Left colon (tissue), 2 donors: ENCODE measurements at regions of chr6 and their contacts with region 1.

Region 1: DNA sequence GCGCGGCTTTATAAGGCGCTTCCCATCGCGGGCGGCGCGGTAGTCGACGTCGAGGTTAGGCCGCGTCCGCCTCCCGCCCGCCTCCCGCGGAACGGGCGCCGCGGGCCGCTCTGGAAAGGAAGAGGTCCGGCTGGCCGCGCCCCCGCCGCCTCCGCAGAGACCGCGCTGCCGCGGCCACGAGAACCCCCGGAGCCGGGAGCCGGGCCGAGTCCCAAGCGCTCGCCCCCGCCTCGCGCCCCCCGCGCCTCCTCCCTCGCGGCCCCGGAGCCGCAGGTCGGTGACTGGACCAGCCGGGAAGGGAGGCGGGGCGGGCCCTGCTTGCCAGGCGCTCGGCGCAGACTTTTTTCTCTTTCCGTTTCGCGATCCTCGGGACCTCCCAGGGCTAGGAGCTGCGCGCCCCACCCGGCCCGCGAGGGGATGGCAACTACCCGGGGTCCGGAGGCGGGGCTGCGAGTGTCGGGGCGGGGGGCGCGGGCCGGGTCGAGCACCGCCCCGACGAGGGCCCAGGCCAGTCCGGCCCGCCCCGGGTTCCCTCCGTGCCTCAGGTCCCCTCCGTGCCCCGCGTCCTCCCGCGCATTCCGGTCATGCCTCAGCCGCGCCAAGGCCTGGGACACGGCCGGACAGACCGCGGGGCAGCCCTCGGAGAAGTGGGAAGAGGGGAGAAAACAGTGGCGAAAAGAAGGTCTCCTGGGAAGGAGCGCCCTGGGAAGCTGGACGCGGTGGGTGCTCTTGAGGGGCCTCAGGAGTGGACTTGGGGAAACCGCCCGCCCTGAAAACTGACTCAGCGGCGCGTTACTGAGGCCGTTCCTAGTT is 423 bp upstream of the PXDC1 start:
- DNase-seq: peak; percentile 83 to 84
- ATAC-seq: peak; percentile 46

Region 2: GRCh38 chr6:3831761-3832530 is 80.0 kb after region 1 on chr6:
- intact Hi-C with region 1: loop called in 1 of 2 experiments (anchors 5 kb)
- DNase-seq: no peak
- ATAC-seq: no peak

Region 3: GRCh38 chr6:3887150-3887700 is 135.3 kb after region 1 on chr6:
- intact Hi-C with region 1: no loop called
- DNase-seq: no peak
- ATAC-seq: peak; percentile 24